Activated CD4-positive, alpha-beta T cell treated with anti-CD3 and anti-CD28 coated beads, Interleukin-2, amount 10 ng/mL, durations not matched to agents 24 days and 14 days (primary cell): ENCODE measurements at regions of chr12 and their contacts with region 1.

Region 1: DNA sequence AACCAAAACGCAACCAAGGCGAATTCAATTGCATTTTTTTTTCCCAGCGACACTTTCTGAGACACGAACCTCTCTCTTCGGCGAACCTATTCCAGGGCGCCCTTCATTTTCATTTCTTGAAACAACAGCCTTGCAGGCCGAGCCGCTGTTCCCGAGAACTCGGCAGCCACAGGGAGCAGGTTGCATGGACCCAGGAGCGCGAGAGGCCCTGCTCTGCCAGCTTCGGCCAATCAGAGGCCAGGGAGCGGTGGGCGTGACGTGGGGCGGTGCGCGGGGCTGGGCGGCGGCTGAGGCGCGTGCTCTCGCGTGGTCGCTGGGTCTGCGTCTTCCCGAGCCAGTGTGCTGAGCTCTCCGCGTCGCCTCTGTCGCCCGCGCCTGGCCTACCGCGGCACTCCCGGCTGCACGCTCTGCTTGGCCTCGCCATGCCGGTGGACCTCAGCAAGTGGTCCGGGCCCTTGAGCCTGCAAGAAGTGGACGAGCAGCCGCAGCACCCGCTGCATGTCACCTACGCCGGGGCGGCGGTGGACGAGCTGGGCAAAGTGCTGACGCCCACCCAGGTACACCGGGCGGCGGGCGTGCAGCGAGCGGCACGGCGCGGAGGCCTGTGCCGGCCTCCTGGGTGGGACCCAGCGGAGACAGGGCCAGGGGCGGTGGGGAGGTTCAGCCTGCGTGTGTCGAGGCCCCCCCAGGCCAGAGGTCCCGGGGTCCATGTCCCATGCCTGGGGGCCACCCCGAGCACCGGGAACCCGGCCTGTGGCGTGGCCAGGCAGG is at the start of gene PEBP1:
- DNase-seq: peak; percentile 99
- H3K4me3 Mint-ChIP-seq: peak within 1 kb of the TSS; percentile 99
- H3K27ac Mint-ChIP-seq: peak within 1 kb of the TSS; percentile 95
- H3K4me1 Mint-ChIP-seq: peaks cover 24% of the 10 kb centered on the region
- H3K27me3 Mint-ChIP-seq: no peaks in the 10 kb centered on the region
- total RNA-seq, gene PEBP1: 206 and 209 TPM in 2 replicates

Region 2: GRCh38 chr12:118120579-118121363 is 15.2 kb before region 1 on chr12:
- intact Hi-C with region 1: loop called (anchors 2 kb)
- DNase-seq: peak; percentile 87
- H3K4me3 Mint-ChIP-seq: no peak overlapping the region
- H3K27ac Mint-ChIP-seq: peak overlapping the region; percentile 69
- H3K4me1 Mint-ChIP-seq: peaks cover 5% of the 10 kb centered on the region
- H3K27me3 Mint-ChIP-seq: no peaks in the 10 kb centered on the region

Region 3: GRCh38 chr12:118183705-118184104 is 47.7 kb after region 1 on chr12:
- intact Hi-C with region 1: loop called (anchors 5 kb)
- DNase-seq: no peak
- H3K4me3 Mint-ChIP-seq: no peak overlapping the region
- H3K27ac Mint-ChIP-seq: no peak overlapping the region
- H3K4me1 Mint-ChIP-seq: peaks cover 8% of the 10 kb centered on the region
- H3K27me3 Mint-ChIP-seq: no peaks in the 10 kb centered on the region